Activated CD8-positive, alpha-beta T cell treated with anti-CD3 and anti-CD28 coated beads for 36 hours (primary cell): ENCODE measurements at regions of chr1 and their contacts with region 1.

Region 1: DNA sequence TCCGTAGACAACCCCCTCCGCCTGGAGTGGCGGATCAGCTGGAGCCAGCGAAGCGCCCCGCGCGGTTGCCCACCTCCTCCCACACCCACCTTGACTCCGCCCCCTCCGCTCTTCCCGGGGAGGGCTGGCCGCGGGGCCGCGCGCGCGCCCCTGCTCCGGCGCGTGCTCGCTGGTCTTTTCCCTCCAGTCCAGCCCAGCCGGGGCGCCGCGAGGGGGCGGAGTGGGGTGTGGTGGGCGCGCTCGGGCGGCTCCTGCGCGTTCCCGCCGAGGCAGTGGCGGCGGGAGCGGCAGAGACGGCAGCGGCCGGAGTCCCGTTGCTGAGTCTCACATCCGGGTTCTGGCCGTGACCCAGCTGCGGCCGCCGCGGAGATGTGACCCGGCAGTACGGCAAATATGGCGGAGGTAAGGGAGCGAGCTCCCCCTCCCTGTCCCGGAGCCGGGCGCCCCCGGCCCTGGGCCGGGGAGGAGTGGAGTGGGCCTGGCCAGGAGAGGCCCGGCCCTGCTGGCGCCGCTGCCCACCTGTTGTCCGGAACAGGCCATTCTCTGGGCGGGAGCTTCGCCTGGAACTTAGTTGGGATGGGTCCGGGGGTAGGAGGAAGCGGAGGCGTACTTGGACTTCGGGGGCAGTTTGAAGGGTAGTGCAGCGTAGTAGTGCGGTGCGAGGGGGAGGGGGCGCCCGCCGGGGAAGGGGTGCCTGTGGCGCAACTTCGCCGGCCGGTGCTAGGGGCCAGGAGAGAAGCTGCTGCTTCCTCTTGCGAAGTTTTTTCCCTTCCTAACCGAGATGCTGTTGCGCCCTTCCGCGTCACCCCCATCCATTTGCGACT is 5.4 kb downstream of the MIER1 start:
- DNase-seq: peak; percentile 94
- ATAC-seq: peak; percentile 67
- H3K4me3 Mint-ChIP-seq: peak overlapping the region; percentile 97
- H3K27ac Mint-ChIP-seq: peak overlapping the region; percentile 92
- H3K4me1 Mint-ChIP-seq: peaks cover 53% of the 10 kb centered on the region
- H3K27me3 Mint-ChIP-seq: no peaks in the 10 kb centered on the region
- CTCF ChIP-seq: no peak

Region 2: GRCh38 chr1:66282343-66282852 is 647.8 kb before region 1 on chr1:
- CTCF ChIA-PET with region 1: no interaction called
- POLR2A ChIA-PET with region 1: no interaction called
- intact Hi-C with region 1: loop called (anchors 10 kb)
- DNase-seq: peak; percentile 89
- ATAC-seq: peak; percentile 82
- H3K4me3 Mint-ChIP-seq: peak overlapping the region; percentile 14
- H3K27ac Mint-ChIP-seq: peak overlapping the region; percentile 93
- H3K4me1 Mint-ChIP-seq: peaks cover 90% of the 10 kb centered on the region
- H3K27me3 Mint-ChIP-seq: no peaks in the 10 kb centered on the region
- CTCF ChIP-seq: no peak

Region 3: DNA sequence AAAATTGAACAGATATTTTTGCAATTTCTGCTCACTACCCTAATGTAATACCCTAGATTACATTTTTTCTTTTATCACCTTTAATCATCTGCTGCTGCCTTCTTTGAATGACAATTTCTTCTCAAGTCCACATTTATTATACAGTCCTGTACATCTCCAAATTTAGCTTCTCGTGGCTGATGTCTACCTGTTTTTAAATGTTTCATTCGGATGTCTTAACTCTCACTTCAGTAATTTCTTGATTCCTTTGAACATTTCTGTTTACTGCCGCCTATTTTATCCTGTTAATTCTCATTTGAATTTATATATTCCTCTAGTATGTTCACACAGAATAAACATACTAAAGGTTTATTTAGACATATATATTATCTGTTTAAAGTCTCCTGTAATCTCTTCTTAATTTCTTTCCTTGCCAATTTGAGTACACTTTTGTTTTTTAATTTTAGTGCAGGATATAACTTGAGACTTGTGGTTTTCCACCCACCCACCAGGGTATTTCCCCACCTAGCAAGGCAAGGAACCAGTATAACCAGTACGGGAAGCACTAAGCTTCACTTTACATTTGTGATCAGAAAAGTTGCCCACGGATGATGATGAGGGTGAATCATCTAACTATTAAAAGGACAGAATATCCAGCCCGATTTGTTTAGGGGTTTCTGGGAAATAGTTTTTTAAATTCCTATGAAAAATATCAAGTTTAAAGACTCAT is 141.8 kb before region 1 on chr1:
- CTCF ChIA-PET with region 1: no interaction called
- POLR2A ChIA-PET with region 1: no interaction called
- intact Hi-C with region 1: loop called (anchors 5 kb)
- DNase-seq: peak; percentile 78
- ATAC-seq: peak; percentile 97
- H3K4me3 Mint-ChIP-seq: peak overlapping the region; percentile 46
- H3K27ac Mint-ChIP-seq: peak overlapping the region; percentile 75
- H3K4me1 Mint-ChIP-seq: peaks cover 23% of the 10 kb centered on the region
- H3K27me3 Mint-ChIP-seq: no peaks in the 10 kb centered on the region
- CTCF ChIP-seq: no peak

Region 4: GRCh38 chr1:67261680-67262079 is 331.5 kb after region 1 on chr1:
- CTCF ChIA-PET with region 1: no interaction called
- POLR2A ChIA-PET with region 1: no interaction called
- intact Hi-C with region 1: no loop called
- DNase-seq: peak; percentile 63
- ATAC-seq: peak; percentile 82
- H3K4me3 Mint-ChIP-seq: no peak overlapping the region
- H3K27ac Mint-ChIP-seq: no peak overlapping the region
- H3K4me1 Mint-ChIP-seq: peaks cover 28% of the 10 kb centered on the region
- H3K27me3 Mint-ChIP-seq: no peaks in the 10 kb centered on the region
- CTCF ChIP-seq: peak; percentile 39